ENCODE measurements at regions of chr14 and their contacts with region 1.

Region 1: GRCh38 chr14:91373591-91374254 is 43.9 kb downstream of the CCDC88C start:
- DNase-seq: peak; percentile 78
- H3K4me3 Mint-ChIP-seq: peak overlapping the region; percentile 59
- H3K27ac Mint-ChIP-seq: peak overlapping the region; percentile 86
- H3K4me1 Mint-ChIP-seq: peaks cover 100% of the 10 kb centered on the region
- H3K27me3 Mint-ChIP-seq: no peaks in the 10 kb centered on the region

Region 2: GRCh38 chr14:91388551-91388975 is 14.8 kb after region 1 on chr14:
- CTCF ChIA-PET with region 1: interaction called, 12 read pairs
- POLR2A ChIA-PET with region 1: interaction called, 6 read pairs
- intact Hi-C with region 1: loop called (anchors 1 kb)
- DNase-seq: peak; percentile 73
- H3K4me3 Mint-ChIP-seq: peak overlapping the region; percentile 35
- H3K27ac Mint-ChIP-seq: peak overlapping the region; percentile 83
- H3K4me1 Mint-ChIP-seq: peaks cover 84% of the 10 kb centered on the region
- H3K27me3 Mint-ChIP-seq: no peaks in the 10 kb centered on the region

Region 3: DNA sequence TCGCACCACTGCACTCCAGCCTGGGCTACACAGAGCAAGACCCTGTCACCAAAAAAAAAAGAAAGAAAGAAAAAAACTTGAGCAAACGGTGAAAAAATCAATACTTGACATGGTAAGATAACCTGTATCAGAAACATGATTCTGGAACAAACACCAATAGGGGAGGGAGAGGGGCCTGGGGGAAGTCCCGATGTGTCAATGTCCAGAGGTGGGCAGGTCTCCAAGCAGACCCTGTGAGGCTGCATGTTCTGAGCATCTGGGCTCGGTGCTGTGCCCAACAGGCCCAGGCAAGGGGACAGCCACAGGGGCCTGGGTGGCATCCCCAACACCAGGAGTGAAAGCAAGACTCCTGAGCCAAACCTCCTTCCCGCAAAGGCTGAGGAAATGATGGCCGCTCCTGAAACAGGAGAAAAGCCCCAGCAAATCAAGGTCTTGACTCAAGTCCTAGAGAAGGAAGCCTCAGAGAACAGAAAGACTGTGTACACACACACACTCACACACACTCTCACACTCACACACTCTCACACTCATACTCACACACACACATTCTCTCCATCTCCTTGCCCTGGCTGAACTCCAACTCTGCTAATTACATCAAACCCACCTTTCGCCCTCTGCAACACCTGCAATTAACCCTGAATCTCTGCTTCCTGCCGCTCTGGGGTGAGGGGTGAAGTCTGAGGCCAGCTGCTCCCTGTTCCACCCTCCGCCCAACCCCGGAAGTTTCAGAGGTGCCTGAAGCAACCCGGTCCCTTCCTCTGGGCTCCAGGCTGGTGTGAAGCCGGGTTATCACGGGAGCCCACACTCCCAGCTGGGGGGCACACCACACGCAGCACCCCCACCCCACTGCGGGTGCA is 23.5 kb after region 1 on chr14:
- CTCF ChIA-PET with region 1: interaction called, 14 read pairs
- POLR2A ChIA-PET with region 1: interaction called, 16 read pairs
- intact Hi-C with region 1: no loop called
- DNase-seq: peak; percentile 84
- H3K4me3 Mint-ChIP-seq: peak overlapping the region; percentile 64
- H3K27ac Mint-ChIP-seq: peak overlapping the region; percentile 89
- H3K4me1 Mint-ChIP-seq: peaks cover 92% of the 10 kb centered on the region
- H3K27me3 Mint-ChIP-seq: no peaks in the 10 kb centered on the region

Region 4: GRCh38 chr14:91649930-91650329 is 276.2 kb after region 1 on chr14:
- CTCF ChIA-PET with region 1: no interaction called
- POLR2A ChIA-PET with region 1: no interaction called
- intact Hi-C with region 1: no loop called
- DNase-seq: no peak
- H3K4me3 Mint-ChIP-seq: no peak overlapping the region
- H3K27ac Mint-ChIP-seq: no peak overlapping the region
- H3K4me1 Mint-ChIP-seq: no peaks in the 10 kb centered on the region
- H3K27me3 Mint-ChIP-seq: no peaks in the 10 kb centered on the region